Right lobe of liver (tissue), 6 donors: ENCODE measurements at regions of chr14 and their contacts with region 1.

Region 1: GRCh38 chr14:73785873-73786695 is 65.5 kb upstream of the PTGR2 start:
- DNase-seq: peak; percentile 82 to 89 (median 86)
- ATAC-seq: peak; percentile 68 to 78 (median 74)
- H3K4me3 ChIP-seq: peak overlapping the region; percentile 62 to 68 (median 66)
- H3K27ac ChIP-seq: peak overlapping the region; percentile 98 to 99 (median 99)
- H3K4me1 ChIP-seq: peaks cover 0 to 44% (median 24%) of the 10 kb centered on the region in 4 donors
- H3K27me3 ChIP-seq: no peaks in the 10 kb centered on the region
- CTCF ChIP-seq: peak in 1 of 4 donors; percentile 56
- POLR2A ChIP-seq: peak; percentile 94

Region 2: GRCh38 chr14:73753959-73754882 is 31.9 kb before region 1 on chr14:
- intact Hi-C with region 1: loop called in 1 of 2 experiments (anchors 5 kb)
- DNase-seq: peak in 2 of 3 donors; percentile 57
- ATAC-seq: peak in 2 of 4 donors; percentile 0 to 2
- H3K4me3 ChIP-seq: peak overlapping the region in 1 of 3 donors; percentile 1
- H3K27ac ChIP-seq: peak overlapping the region; percentile 43 to 72 (median 70)
- H3K4me1 ChIP-seq: peaks cover 12 to 97% (median 66%) of the 10 kb centered on the region in 4 donors
- H3K27me3 ChIP-seq: no peaks in the 10 kb centered on the region
- CTCF ChIP-seq: no peak
- POLR2A ChIP-seq: no peak

Region 3: DNA sequence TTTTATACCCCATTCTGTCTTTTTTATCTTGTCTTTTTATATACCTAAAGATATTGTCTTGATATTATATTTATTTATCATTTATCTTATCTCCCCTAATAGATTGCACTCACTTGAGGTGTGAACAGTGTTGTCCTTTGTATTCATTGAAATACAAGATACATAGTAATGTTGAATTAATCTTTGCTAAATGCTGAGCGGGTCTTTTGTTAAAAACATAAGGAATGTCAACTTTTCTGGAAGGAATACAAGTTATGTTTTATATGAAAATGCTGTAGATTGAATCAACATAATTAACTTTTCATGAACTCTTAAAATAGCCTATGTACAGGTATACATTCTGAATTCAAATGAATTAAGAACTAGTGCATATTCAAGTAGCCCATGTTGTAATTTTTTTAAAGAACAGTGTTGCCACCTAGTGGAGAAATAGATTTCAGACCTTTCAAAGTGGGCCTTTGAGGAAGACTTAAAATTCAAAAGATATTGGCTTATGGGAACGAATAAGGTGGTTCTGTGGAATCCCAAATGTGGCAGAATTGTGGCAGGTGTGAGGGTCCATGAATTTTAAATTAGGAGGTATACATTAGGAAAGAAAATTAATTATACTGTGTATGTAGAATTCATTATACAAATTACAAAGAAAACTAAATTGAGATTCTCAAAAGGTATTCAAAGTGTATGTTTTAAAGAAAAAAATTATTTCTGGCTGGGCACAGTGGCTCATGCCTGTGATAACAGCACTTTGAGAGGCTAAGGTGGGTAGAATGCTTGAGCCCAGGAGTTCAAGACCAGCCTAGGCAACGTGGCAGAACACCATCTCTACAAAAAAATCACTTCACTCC is 252.2 kb after region 1 on chr14:
- intact Hi-C with region 1: no loop called
- DNase-seq: no peak
- ATAC-seq: peak; percentile 60 to 81 (median 78)
- H3K4me3 ChIP-seq: no peak overlapping the region
- H3K27ac ChIP-seq: no peak overlapping the region
- H3K4me1 ChIP-seq: no peaks in the 10 kb centered on the region
- H3K27me3 ChIP-seq: no peaks in the 10 kb centered on the region
- CTCF ChIP-seq: peak; percentile 71 to 78 (median 72)
- POLR2A ChIP-seq: no peak